ENCODE measurements at regions of chr3 and their contacts with region 1.

Region 1: GRCh38 chr3:111717601-111718000 is 122.5 kb upstream of the ZBED2 start:
- DNase-seq: peak; percentile 84

Region 2: DNA sequence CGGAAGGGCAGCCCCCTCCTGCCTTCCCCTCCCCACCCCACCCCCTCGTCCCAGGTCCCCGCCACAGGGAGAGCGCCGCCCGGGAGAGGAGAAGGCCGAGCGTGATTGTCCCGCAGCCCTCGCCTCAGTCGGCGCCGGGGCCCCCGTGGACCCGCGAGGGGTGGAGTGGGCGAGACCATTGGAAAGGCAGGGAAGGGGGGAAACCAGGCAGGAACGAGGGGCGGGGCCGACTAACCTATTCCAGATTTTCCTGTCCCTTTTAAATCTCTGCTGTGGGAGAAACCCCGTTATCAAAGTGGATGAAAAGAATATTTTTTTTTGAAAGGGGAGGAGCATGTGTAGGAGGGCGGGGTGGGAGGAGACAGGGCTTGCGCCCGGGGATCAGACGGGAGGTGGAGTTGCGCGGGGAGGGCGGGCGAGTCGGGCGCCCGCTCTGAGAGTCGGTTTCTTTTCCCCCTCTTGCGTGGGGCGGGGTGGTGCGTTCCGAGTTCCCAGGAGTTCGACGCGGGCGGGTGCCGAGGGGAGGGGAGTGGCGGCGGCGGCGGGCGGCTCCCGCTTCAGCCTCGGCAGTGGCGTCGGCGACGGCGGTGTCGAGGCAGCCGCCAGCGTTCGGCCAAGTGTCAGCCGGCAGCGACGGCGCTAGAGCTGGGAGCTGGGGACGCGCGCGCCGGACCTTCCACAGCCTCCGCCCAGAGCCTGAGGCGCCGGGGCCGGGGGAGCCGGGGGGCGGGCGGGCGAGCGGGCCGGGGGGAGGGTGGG is 646.2 kb before region 1 on chr3 and contains the start of gene NECTIN3:
- intact Hi-C with region 1: no loop called
- DNase-seq: peak; percentile 98
- total RNA-seq, gene NECTIN3: 21.0 to 21.8 TPM

Region 3: GRCh38 chr3:111691293-111691909 is 26.2 kb before region 1 on chr3:
- intact Hi-C with region 1: no loop called
- DNase-seq: no peak

Region 4: DNA sequence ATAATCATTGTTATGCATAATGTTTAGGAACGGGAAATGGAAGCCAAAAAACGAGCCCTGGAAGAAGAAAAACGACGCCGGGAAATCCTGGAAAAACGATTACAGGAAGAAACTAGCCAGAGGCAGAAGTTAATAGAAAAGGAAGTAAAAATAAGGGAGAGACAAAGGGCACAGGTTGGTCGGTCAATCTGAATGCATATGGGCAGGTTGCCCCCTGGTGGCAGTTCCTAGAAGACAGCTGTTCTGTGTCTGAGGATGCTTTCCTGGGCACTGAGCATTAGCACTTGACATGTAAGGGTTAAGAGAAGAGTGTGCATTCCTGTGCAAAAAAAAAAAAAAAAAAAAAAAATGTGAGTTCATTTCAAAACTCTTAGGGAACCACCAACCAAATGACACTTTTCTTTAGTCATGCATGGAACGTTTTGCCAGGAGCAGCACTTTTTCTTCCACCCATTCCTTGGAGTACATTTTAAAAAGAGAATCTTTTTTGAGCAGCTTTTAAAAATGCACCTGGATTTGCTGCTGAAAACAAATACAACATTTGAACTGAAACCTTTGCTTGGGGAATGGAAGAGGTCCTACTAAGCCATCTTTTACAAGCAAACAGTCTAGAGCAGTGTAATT is 250.2 kb after region 1 on chr3:
- intact Hi-C with region 1: loop called (anchors 5 kb)
- DNase-seq: peak; percentile 90

Region 5: GRCh38 chr3:112038863-112039262 is 321.3 kb after region 1 on chr3:
- intact Hi-C with region 1: no loop called
- DNase-seq: no peak

Measured in posterior vena cava (tissue), 2 donors.